Right ventricle myocardium superior (tissue), 1 donor: ENCODE measurements at regions of chr17 and their contacts with region 1.

Region 1: GRCh38 chr17:34637548-34638525 is 58.5 kb downstream of the TMEM132E start:
- DNase-seq: peak; percentile 84
- ATAC-seq: peak; percentile 97

Region 2: GRCh38 chr17:34398990-34399389 is 238.8 kb before region 1 on chr17:
- intact Hi-C with region 1: no loop called
- DNase-seq: no peak
- ATAC-seq: no peak

Region 3: GRCh38 chr17:34420254-34420766 is 217.5 kb before region 1 on chr17:
- intact Hi-C with region 1: loop called (anchors 5 kb)
- DNase-seq: peak; percentile 58
- ATAC-seq: peak; percentile 73

Region 4: DNA sequence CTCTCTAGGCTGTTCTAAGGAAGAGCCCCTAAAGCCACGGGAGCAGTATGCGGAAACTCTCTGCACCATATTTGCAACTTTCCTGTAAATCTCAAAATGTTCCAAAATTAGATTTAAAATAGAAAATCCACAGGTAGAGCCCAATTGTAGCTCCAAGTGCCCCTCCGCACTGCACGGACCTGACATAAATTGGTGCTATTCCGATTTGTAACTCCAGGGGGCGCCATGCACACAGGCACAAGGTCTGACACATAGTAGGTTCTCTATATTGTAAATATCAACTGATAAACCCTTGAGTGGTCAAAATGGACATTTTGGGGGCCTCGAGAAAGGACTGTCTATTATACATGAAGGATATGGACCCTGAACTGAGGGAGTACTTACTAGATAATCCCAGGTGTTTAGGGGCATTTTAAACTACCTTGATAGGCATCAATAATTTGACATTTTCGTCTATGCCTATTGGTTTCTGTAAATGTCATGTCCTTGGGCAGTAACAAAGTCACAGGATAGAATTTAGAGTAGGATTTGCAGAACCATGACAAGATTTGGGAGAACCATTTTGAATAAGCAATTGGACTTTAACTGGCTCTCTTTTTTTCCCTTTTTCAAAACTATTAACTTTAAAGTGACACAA is 95.0 kb before region 1 on chr17:
- intact Hi-C with region 1: loop called (anchors 5 kb)
- DNase-seq: no peak
- ATAC-seq: no peak

Region 5: DNA sequence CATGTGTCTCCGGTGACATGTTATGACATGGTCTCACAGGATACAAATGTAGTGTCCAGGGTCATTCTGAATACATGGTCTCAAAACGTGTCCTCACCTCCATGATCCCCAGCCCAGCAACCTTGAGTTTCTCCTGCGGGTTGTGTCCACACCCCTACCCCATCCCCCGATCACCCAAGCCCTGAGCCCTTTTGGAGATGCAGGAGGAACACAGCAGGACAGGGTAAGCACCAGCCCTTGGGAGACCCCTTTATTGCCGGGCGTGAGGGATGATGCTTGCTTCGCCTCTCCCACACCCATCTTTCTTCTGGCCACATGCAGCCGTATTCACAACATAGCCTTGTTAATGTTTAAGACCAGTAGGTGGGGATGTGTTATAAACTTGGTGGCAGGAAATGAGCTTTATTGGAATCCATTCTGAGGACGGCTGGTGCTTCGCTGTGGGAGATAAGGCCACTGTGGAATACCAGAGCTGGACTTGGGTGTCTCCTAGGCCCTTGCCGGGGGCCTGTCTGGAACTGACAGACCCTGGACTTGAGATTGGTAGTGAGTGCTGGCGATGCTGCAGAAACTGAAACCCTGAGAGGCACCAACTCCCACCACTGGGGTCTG is 52.9 kb before region 1 on chr17:
- intact Hi-C with region 1: loop called (anchors 10 kb)
- DNase-seq: no peak
- ATAC-seq: no peak

Region 6: DNA sequence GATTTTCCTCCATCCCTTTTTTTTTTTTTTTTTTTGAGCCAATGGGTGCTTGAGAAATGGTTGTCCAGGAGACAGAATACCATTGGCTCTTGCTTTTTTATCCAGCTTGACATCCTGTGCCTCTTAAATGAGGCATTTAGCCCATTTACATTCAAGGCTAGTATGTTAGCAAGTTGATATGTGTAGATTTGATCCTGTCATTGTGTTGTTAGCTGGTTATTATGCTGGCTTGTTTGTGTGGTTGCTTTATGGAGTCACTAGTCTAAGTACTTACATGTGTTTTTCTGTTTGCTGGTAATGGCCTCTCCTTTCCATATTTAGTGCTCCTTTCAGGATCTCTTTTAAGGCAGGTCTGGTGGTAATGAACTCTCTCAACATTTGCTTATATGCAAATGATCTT is 749.7 kb after region 1 on chr17:
- intact Hi-C with region 1: no loop called
- DNase-seq: no peak
- ATAC-seq: no peak